AG04450 (cell line): ENCODE measurements at regions of chr2 and their contacts with region 1.

Region 1: GRCh38 chr2:235595422-235596010 is 101.7 kb downstream of the AGAP1 start:
- DNase-seq: peak; percentile 51
- H3K4me3 ChIP-seq: no peak overlapping the region
- H3K27ac ChIP-seq: no peak overlapping the region
- H3K27me3 ChIP-seq: no peaks in the 10 kb centered on the region
- CTCF ChIP-seq: peak; percentile 93

Region 2: DNA sequence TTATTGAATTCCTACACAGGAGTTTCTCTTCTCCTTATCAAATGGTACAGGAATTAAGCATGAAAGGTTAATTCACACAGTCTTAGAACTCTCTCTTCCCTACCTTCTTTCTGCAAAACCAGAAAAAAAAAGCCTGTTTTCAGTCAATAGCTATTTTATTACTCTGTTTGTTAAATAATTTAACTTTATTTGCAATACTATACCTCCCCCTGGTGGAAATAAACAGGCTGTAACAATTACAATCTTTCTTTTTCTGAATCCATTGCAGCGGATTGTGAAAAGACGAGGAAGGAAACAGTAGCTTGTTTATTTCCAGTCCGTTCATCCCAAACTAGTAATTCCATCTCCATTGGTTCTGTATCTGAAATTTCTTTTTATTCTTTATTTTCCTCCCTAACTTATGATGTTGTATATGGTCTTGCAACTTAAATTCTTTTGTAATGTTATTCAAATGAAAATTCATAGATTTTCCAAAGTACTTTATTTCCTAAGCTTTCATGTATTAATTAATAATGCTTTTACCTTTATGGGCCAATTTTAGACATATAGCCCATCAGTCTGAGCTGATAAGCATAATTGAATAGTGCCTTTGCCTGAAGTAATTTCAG is 478.5 kb before region 1 on chr2:
- CTCF ChIA-PET with region 1: interaction called, 31 read pairs
- POLR2A ChIA-PET with region 1: interaction called, 4 read pairs
- DNase-seq: no peak
- H3K4me3 ChIP-seq: no peak overlapping the region
- H3K27ac ChIP-seq: no peak overlapping the region
- H3K27me3 ChIP-seq: no peaks in the 10 kb centered on the region
- CTCF ChIP-seq: peak; percentile 64

Region 3: GRCh38 chr2:235135990-235136561 is 459.4 kb before region 1 on chr2:
- CTCF ChIA-PET with region 1: interaction called, 164 read pairs
- POLR2A ChIA-PET with region 1: interaction called, 4 read pairs
- DNase-seq: peak; percentile 47
- H3K4me3 ChIP-seq: no peak overlapping the region
- H3K27ac ChIP-seq: no peak overlapping the region
- H3K27me3 ChIP-seq: peaks cover 27% of the 10 kb centered on the region
- CTCF ChIP-seq: peak; percentile 86

Region 4: GRCh38 chr2:235418918-235419317 is 176.6 kb before region 1 on chr2:
- CTCF ChIA-PET with region 1: interaction called, 12 read pairs
- POLR2A ChIA-PET with region 1: no interaction called
- DNase-seq: no peak
- H3K4me3 ChIP-seq: no peak overlapping the region
- H3K27ac ChIP-seq: no peak overlapping the region
- H3K27me3 ChIP-seq: peaks cover 12% of the 10 kb centered on the region
- CTCF ChIP-seq: no peak

Region 5: DNA sequence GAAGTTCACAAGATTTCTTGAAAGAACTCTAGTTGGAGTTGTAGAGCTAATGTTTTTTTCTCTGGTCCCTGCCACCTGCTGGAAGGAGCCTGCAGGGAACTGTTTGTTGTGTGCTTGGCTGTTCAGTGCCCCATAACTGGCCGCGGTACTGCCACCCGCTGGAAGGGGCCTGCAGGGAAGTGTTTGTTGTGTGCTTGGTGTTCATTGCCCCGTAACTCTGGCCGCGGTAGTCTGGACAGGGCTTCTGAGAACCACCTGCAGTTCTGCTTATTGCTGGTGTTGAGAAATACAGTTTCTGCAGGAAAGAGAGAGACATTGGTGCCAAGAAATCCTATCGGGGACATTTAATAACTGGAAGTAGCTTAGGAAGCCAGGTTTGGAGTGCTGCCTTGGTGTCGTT is 43.6 kb before region 1 on chr2:
- CTCF ChIA-PET with region 1: interaction called, 10 read pairs
- POLR2A ChIA-PET with region 1: no interaction called
- DNase-seq: no peak
- H3K4me3 ChIP-seq: no peak overlapping the region
- H3K27ac ChIP-seq: no peak overlapping the region
- H3K27me3 ChIP-seq: no peaks in the 10 kb centered on the region
- CTCF ChIP-seq: peak; percentile 58

Region 6: DNA sequence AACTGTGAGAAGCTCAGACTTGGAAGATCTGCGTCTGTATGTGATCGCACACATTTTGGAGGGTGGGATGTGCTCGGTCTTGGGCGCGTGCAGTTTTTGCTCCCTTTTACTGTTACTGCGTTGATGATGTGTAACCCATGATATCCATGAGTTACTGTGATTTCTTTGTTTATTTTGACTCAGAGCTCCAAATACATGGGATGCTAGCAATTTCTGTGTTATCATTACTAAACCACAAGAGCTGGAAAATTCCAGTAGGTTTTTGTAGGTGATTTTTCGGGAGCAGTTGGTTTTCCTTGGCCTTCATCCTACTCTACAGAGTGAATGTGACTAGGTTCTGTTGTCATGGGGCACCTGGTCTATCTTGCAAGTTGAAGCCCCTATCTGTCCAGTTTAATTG is 22.5 kb after region 1 on chr2:
- CTCF ChIA-PET with region 1: interaction called, 15 read pairs
- POLR2A ChIA-PET with region 1: interaction called, 3 read pairs
- DNase-seq: peak; percentile 58
- H3K4me3 ChIP-seq: no peak overlapping the region
- H3K27ac ChIP-seq: peak overlapping the region; percentile 77
- H3K27me3 ChIP-seq: peaks cover 5% of the 10 kb centered on the region
- CTCF ChIP-seq: no peak

Region 7: GRCh38 chr2:235675678-235676535 is 80.4 kb after region 1 on chr2:
- CTCF ChIA-PET with region 1: interaction called, 80 read pairs
- POLR2A ChIA-PET with region 1: no interaction called
- DNase-seq: no peak
- H3K4me3 ChIP-seq: no peak overlapping the region
- H3K27ac ChIP-seq: no peak overlapping the region
- H3K27me3 ChIP-seq: no peaks in the 10 kb centered on the region
- CTCF ChIP-seq: peak; percentile 26